ENCODE measurements at regions of chr5 and their contacts with region 1.

Region 1: GRCh38 chr5:53481887-53482716 is 1.7 kb downstream of the FST start:
- DNase-seq: peak; percentile 70 to 74 (median 70)
- H3K4me3 ChIP-seq: peak overlapping the region; percentile 53 to 83 (median 68)
- H3K4me3 Mint-ChIP-seq: peak overlapping the region; percentile 93 to 94
- H3K27ac ChIP-seq: peak overlapping the region in 1 of 2 donors; percentile 60
- H3K27ac Mint-ChIP-seq: peak overlapping the region in 6 of 7 donors; percentile 34 to 89 (median 68)
- H3K4me1 ChIP-seq: peaks cover 33 to 40% of the 10 kb centered on the region in 2 donors
- H3K4me1 Mint-ChIP-seq: peaks cover 38% of the 10 kb centered on the region
- H3K27me3 ChIP-seq: peaks cover 31 to 59% of the 10 kb centered on the region in 2 donors
- H3K27me3 Mint-ChIP-seq: peaks cover 40 to 66% (median 62%) of the 10 kb centered on the region in 3 donors
- CTCF ChIP-seq: peak; percentile 46

Region 2: DNA sequence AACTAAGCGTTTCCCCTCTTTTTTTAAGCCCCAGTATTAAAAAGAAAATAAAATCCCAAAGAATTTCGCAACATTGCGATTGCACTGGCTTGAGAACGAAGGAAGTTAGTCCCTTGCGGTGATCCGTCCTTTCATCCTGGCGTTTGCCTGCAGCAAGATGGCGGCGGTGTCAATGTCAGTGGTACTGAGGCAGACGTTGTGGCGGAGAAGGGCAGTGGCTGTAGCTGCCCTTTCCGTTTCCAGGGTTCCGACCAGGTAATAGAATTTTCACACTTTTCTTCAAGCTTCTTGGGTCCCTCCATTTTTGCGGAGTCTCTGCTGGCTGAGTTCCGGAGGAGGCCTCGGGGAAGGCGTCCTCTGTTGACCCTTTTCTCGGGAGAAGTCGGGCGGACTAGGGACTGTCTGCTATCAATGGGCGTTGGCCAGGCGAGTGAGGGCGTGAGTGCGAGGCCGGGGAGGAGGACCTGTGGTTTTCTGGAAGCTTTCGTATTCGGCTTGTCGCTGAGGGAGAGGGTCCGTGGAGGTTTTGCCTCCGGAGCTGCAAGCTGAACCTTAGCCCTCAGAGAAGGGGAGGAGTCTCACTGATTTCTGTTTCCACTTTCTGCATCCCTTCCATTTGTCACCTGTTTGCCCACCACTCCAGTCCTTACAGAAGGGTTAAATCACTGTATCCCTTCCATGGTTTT is 78.5 kb after region 1 on chr5 and contains the start of gene NDUFS4:
- intact Hi-C with region 1: loop called in 1 of 2 experiments (anchors 2 kb)
- DNase-seq: peak; percentile 76 to 83 (median 78)
- H3K4me3 ChIP-seq: peak within 1 kb of the TSS; percentile 71 to 90 (median 88)
- H3K4me3 Mint-ChIP-seq: peak within 1 kb of the TSS; percentile 99 to 100
- H3K27ac ChIP-seq: peak within 1 kb of the TSS; percentile 80 to 92
- H3K27ac Mint-ChIP-seq: peak within 1 kb of the TSS; percentile 94 to 99 (median 97)
- H3K4me1 ChIP-seq: peaks cover 12 to 15% of the 10 kb centered on the region in 2 donors
- H3K4me1 Mint-ChIP-seq: peaks cover 24% of the 10 kb centered on the region
- H3K27me3 ChIP-seq: no peaks in the 10 kb centered on the region
- H3K27me3 Mint-ChIP-seq: peaks cover 2 to 4% (median 2%) of the 10 kb centered on the region in 3 donors
- CTCF ChIP-seq: no peak
- polyA plus RNA-seq, gene NDUFS4: 42.5 to 118 (median 111) TPM